ENCODE measurements at regions of chr4 and their contacts with region 1.

Region 1: GRCh38 chr4:118888666-118889311 is at the start of gene SYNPO2:
- DNase-seq: peak in 6 of 9 donors; percentile 9 to 33 (median 14)
- ATAC-seq: peak; percentile 66
- H3K4me3 ChIP-seq: peak within 1 kb of the TSS; percentile 46
- H3K4me3 Mint-ChIP-seq: peak within 1 kb of the TSS; percentile 61 to 85 (median 78)
- H3K27ac ChIP-seq: no peak within 1 kb of the TSS
- H3K27ac Mint-ChIP-seq: peak within 1 kb of the TSS in 1 of 9 donors; percentile 8
- H3K4me1 ChIP-seq: peaks cover 0 to 5% of the 10 kb centered on the region in 2 donors
- H3K4me1 Mint-ChIP-seq: peaks cover 10 to 21% (median 18%) of the 10 kb centered on the region in 7 donors
- H3K27me3 ChIP-seq: peaks cover 3 to 6% of the 10 kb centered on the region in 2 donors
- H3K27me3 Mint-ChIP-seq: peaks cover 26 to 51% (median 40%) of the 10 kb centered on the region in 5 donors
- total RNA-seq, gene SYNPO2: 0.61 to 1.1 (median 0.93) TPM

Region 2: DNA sequence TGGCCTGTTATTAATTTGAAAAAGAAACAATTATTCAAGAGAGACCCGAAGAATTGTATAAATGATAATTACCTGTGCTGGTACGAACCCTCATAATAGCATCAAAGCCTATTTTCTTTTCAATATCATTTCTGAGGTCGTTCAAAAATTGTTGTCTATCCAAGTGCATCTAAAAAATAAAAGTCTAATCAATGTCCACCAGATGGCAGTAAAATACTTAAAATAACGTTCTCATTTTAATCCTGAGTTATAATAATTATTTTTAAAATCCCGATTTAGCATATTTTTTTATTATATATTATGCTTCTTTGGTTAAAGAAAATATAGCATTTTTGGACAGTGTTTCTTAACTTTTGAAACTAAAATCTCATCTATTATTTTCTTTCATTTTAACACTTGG is 147.9 kb before region 1 on chr4:
- CTCF ChIA-PET with region 1: interaction called, 3 read pairs
- POLR2A ChIA-PET with region 1: no interaction called
- intact Hi-C with region 1: loop called (anchors 1 kb)
- DNase-seq: peak in 2 of 9 donors; percentile 12 to 15
- ATAC-seq: no peak
- H3K4me3 ChIP-seq: no peak overlapping the region
- H3K4me3 Mint-ChIP-seq: no peak overlapping the region
- H3K27ac ChIP-seq: no peak overlapping the region
- H3K27ac Mint-ChIP-seq: no peak overlapping the region
- H3K4me1 ChIP-seq: no peaks in the 10 kb centered on the region
- H3K4me1 Mint-ChIP-seq: no peaks in the 10 kb centered on the region
- H3K27me3 ChIP-seq: no peaks in the 10 kb centered on the region
- H3K27me3 Mint-ChIP-seq: no peaks in the 10 kb centered on the region

Region 3: DNA sequence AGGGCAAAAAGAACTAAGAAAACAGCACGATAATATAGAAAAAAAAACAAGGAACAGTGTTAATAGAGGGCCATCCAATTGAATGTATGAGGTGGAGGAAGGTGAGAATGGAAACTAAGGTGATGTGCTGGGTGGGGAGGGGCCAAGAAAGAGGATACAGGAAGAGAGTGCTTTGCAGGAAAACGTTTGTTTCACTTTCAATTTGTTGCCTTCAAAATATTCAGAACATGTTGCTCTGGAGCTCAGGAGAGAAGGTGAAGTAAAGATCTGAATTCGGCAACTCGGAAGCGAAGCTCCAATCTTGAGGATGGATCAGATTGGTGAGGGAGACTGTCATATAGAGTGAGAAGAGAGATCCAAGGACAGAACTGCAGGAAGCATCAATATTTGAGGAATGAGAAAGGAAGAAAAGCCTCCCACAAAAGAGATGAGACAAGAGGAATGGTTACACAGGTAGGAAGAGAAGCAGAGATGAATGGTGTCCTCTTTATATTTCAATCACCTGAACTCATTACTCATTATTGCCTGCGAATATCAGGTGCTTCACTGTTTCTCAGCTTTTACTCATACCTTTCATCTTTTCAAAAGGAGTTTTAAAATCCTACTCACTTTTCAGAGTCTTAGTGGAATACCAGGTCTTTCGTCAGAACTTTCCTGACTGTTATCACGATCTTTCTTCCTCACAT is 38.2 kb before region 1 on chr4:
- CTCF ChIA-PET with region 1: interaction called, 3 read pairs
- POLR2A ChIA-PET with region 1: no interaction called
- intact Hi-C with region 1: loop called in 1 of 2 experiments (anchors 5 kb)
- DNase-seq: peak in 7 of 9 donors; percentile 49 to 65 (median 59)
- ATAC-seq: peak; percentile 93
- H3K4me3 ChIP-seq: peak overlapping the region; percentile 78
- H3K4me3 Mint-ChIP-seq: peak overlapping the region; percentile 86 to 99 (median 93)
- H3K27ac ChIP-seq: peak overlapping the region; percentile 73
- H3K27ac Mint-ChIP-seq: peak overlapping the region; percentile 92 to 99 (median 96)
- H3K4me1 ChIP-seq: peaks cover 0 to 9% of the 10 kb centered on the region in 2 donors
- H3K4me1 Mint-ChIP-seq: peaks cover 14 to 37% (median 28%) of the 10 kb centered on the region in 7 donors
- H3K27me3 ChIP-seq: no peaks in the 10 kb centered on the region
- H3K27me3 Mint-ChIP-seq: peaks cover 0 to 20% (median 3%) of the 10 kb centered on the region in 5 donors

Measured in naive thymus-derived CD4-positive, alpha-beta T cell (primary cell).